ENCODE measurements at regions of chr15 and their contacts with region 1.

Region 1: DNA sequence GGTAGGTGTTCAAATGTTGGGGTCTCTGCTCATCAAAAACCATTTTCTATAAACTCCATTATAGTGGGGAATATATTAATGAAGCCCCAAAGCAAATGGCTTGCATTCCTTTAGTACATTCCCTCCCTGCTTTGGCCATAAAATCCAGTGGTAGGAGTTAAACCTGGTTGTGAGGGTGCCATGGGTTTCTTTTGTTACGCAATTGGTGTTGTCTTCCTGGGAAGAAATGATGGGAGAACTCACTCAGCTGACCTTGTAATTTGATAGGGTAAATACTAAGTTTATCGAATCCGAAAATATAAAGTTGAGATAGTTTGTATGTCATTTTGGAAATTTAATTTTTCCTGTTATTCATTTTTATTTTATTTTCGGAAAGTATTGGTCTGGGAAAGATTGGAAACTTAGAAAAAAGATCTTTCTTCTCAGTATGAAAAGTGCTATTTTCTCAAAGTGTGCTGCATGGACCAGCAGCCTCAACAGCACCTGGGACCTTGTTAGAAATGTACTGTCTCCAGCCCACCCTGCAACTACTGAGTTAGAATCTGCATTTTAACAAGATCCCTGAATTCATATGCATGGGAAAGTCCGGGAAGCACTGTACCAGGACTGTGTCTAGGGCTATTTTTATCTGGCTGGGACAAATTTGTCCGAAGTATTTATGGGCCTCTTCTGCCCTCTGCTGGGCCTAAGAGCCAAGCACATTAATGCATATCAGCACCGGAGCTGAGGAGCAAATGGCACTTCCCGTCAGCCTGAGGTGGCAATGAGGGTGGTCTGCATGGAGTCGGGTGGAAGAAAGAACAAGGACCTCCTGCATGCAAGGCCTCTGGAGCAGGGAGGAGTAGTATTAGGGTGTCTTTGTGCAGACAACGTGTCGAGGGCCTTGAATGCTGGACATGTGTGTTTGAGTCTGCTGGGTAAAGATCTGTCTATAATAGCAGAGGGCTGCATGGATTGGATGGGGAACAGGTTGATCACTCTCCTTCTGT is 54.7 kb downstream of the FAM81A start:
- DNase-seq: peak; percentile 34 to 71
- ATAC-seq: peak; percentile 88 to 96 (median 94)
- H3K4me3 ChIP-seq: peak overlapping the region in 2 of 10 donors; percentile 10 to 20
- H3K27ac ChIP-seq: no peak overlapping the region
- H3K4me1 ChIP-seq: peaks cover 0 to 19% (median 9%) of the 10 kb centered on the region in 9 donors
- H3K27me3 ChIP-seq: no peaks in the 10 kb centered on the region
- CTCF ChIP-seq: peak; percentile 76 to 90 (median 84)

Region 2: DNA sequence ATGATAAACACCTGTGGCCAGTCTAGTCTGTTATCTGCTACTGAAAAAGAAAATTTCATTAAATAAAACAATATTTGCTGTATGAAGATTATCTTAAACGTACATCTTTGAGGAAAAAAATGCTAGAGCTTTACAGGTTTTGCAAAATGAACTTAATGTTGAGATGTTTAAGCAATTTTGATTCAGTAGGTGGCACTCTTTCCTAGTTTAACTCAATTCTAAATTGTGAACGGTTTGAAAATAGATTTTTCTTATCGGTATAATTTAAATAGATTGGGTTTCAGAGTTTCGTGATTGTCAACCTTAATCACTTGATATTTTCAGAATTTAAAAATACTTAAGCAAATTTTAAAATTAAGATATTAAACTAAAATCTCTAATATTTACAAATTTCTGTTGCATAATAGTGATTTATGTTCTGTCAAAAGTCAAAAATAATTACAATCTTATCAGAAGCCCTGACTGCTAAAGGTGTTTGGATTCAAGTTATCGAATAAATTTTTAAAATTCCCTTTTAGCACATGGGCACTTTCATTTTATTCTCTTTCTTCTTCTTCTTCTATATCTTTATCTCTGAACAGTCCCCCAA is 512.2 kb before region 1 on chr15:
- intact Hi-C with region 1: loop called in 9 of 10 experiments (anchors 2 to 10 kb)
- DNase-seq: no peak
- ATAC-seq: no peak
- H3K4me3 ChIP-seq: no peak overlapping the region
- H3K27ac ChIP-seq: no peak overlapping the region
- H3K4me1 ChIP-seq: peaks cover 0 to 43% (median 5%) of the 10 kb centered on the region in 9 donors
- H3K27me3 ChIP-seq: no peaks in the 10 kb centered on the region
- CTCF ChIP-seq: peak; percentile 28 to 73 (median 65)

Region 3: GRCh38 chr15:59174835-59175831 is 317.6 kb before region 1 on chr15:
- intact Hi-C with region 1: loop called in 9 of 10 experiments (anchors 5 to 10 kb)
- DNase-seq: peak; percentile 32 to 44
- ATAC-seq: peak; percentile 64 to 84 (median 81)
- H3K4me3 ChIP-seq: no peak overlapping the region
- H3K27ac ChIP-seq: peak overlapping the region in 2 of 10 donors; percentile 58 to 69
- H3K4me1 ChIP-seq: peaks cover 0 to 49% (median 11%) of the 10 kb centered on the region in 9 donors
- H3K27me3 ChIP-seq: no peaks in the 10 kb centered on the region
- CTCF ChIP-seq: peak; percentile 17 to 73 (median 55)

Region 4: GRCh38 chr15:59372352-59373211 is 120.1 kb before region 1 on chr15 and contains the start of gene MYO1E:
- intact Hi-C with region 1: loop called in 7 of 10 experiments (anchors 5 to 10 kb)
- DNase-seq: peak; percentile 76 to 94
- ATAC-seq: peak; percentile 95 to 98 (median 98)
- H3K4me3 ChIP-seq: peak within 1 kb of the TSS; percentile 75 to 99 (median 90)
- H3K27ac ChIP-seq: peak within 1 kb of the TSS; percentile 83 to 97 (median 93)
- H3K4me1 ChIP-seq: peaks cover 0 to 35% (median 17%) of the 10 kb centered on the region in 9 donors
- H3K27me3 ChIP-seq: peaks cover 0 to 30% (median 0%) of the 10 kb centered on the region in 7 donors
- CTCF ChIP-seq: no peak
- total RNA-seq, gene MYO1E: 20.6 to 75.3 (median 28.4) TPM

Region 5: GRCh38 chr15:59751552-59752413 is 259.1 kb after region 1 on chr15:
- intact Hi-C with region 1: no loop called
- DNase-seq: no peak
- ATAC-seq: peak in 1 of 8 donors; percentile 38
- H3K4me3 ChIP-seq: no peak overlapping the region
- H3K27ac ChIP-seq: no peak overlapping the region
- H3K4me1 ChIP-seq: no peaks in the 10 kb centered on the region
- H3K27me3 ChIP-seq: peaks cover 0 to 54% (median 31%) of the 10 kb centered on the region in 7 donors
- CTCF ChIP-seq: peak in 6 of 9 donors; percentile 20 to 53 (median 36)

Region 6: GRCh38 chr15:60620708-60621107 is 1128.0 kb after region 1 on chr15:
- intact Hi-C with region 1: no loop called
- DNase-seq: no peak
- ATAC-seq: peak in 2 of 8 donors; percentile 34 to 53
- H3K4me3 ChIP-seq: no peak overlapping the region
- H3K27ac ChIP-seq: no peak overlapping the region
- H3K4me1 ChIP-seq: peaks cover 0 to 6% (median 0%) of the 10 kb centered on the region in 9 donors
- H3K27me3 ChIP-seq: no peaks in the 10 kb centered on the region
- CTCF ChIP-seq: no peak

Measured in heart right ventricle (tissue), 16 donors.